ENCODE measurements at regions of chr17 and their contacts with region 1.

Region 1: DNA sequence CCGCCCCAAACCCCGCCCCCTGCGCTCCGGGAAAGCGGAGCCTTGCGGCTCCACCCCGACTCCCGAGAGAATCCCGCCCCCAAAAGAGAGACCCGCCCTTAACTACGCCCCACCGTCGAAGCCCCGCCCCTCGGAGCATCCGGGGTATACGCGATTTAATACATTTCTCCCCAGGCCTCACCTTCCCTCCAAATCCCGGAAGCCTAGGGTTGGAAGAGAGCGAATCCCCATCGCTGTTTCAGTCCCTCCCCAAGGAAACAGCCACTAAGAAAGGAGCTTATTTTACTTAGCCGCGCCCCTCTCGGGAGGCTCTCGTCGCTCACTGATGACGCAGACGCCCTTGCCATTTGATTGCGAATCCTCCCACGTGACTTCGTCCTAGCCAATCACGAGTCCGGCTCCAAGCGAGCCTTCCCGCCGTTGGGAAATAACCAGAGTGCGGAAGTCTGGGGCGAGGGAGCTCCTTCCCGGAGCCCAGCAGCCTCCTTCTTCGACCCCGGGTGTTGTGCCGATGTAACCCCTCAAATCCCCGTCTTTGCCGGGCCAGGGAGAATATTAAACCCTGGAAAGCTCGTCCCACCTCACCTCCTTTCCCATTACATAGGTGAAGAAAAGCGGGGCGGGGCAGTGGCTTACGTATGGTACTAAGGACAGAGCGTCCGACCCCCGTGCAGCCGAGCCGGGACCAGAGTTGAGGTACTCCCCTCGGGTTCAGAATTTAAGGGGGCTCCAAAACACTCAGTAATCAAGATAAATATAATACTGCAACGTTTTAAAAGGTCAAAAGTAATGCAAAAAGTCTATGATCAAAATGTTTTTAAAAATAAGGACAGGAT is 462 bp upstream of the FDXR start:
- DNase-seq: peak; percentile 97 to 100 (median 99)
- H3K4me3 ChIP-seq: peak overlapping the region; percentile 79 to 84
- H3K4me3 Mint-ChIP-seq: peak overlapping the region; percentile 87 to 98 (median 94)
- H3K27ac ChIP-seq: peak overlapping the region; percentile 90
- H3K27ac Mint-ChIP-seq: peak overlapping the region; percentile 90 to 98 (median 98)
- H3K4me1 ChIP-seq: peaks cover 22% of the 10 kb centered on the region
- H3K4me1 Mint-ChIP-seq: peaks cover 10 to 27% (median 17%) of the 10 kb centered on the region in 4 donors
- H3K27me3 ChIP-seq: no peaks in the 10 kb centered on the region
- H3K27me3 Mint-ChIP-seq: no peaks in the 10 kb centered on the region

Region 2: GRCh38 chr17:74748529-74749365 is 124.5 kb before region 1 on chr17 and contains the start of gene NHERF1:
- CTCF ChIA-PET with region 1: interaction called, 6 read pairs
- POLR2A ChIA-PET with region 1: interaction called, 17 read pairs
- intact Hi-C with region 1: loop called (anchors 1 kb)
- DNase-seq: peak; percentile 61 to 96 (median 94)
- H3K4me3 ChIP-seq: peak within 1 kb of the TSS; percentile 64 to 92
- H3K4me3 Mint-ChIP-seq: peak within 1 kb of the TSS; percentile 90 to 99 (median 98)
- H3K27ac ChIP-seq: peak within 1 kb of the TSS; percentile 80
- H3K27ac Mint-ChIP-seq: peak within 1 kb of the TSS; percentile 88 to 98 (median 94)
- H3K4me1 ChIP-seq: peaks cover 73% of the 10 kb centered on the region
- H3K4me1 Mint-ChIP-seq: peaks cover 43 to 81% (median 60%) of the 10 kb centered on the region in 4 donors
- H3K27me3 ChIP-seq: no peaks in the 10 kb centered on the region
- H3K27me3 Mint-ChIP-seq: no peaks in the 10 kb centered on the region
- total RNA-seq, gene NHERF1: 202 to 209 TPM

Region 3: GRCh38 chr17:74852237-74853047 is 20.8 kb before region 1 on chr17:
- CTCF ChIA-PET with region 1: no interaction called
- POLR2A ChIA-PET with region 1: interaction called, 6 read pairs
- intact Hi-C with region 1: loop called (anchors 1 kb)
- DNase-seq: peak; percentile 60 to 80 (median 71)
- H3K4me3 ChIP-seq: peak overlapping the region in 1 of 2 donors; percentile 41
- H3K4me3 Mint-ChIP-seq: peak overlapping the region; percentile 75 to 84 (median 78)
- H3K27ac ChIP-seq: no peak overlapping the region
- H3K27ac Mint-ChIP-seq: peak overlapping the region in 2 of 7 donors; percentile 24 to 72
- H3K4me1 ChIP-seq: peaks cover 11% of the 10 kb centered on the region
- H3K4me1 Mint-ChIP-seq: peaks cover 3 to 19% (median 6%) of the 10 kb centered on the region in 4 donors
- H3K27me3 ChIP-seq: peaks cover 25% of the 10 kb centered on the region
- H3K27me3 Mint-ChIP-seq: peaks cover 19 to 50% of the 10 kb centered on the region in 2 donors

Region 4: DNA sequence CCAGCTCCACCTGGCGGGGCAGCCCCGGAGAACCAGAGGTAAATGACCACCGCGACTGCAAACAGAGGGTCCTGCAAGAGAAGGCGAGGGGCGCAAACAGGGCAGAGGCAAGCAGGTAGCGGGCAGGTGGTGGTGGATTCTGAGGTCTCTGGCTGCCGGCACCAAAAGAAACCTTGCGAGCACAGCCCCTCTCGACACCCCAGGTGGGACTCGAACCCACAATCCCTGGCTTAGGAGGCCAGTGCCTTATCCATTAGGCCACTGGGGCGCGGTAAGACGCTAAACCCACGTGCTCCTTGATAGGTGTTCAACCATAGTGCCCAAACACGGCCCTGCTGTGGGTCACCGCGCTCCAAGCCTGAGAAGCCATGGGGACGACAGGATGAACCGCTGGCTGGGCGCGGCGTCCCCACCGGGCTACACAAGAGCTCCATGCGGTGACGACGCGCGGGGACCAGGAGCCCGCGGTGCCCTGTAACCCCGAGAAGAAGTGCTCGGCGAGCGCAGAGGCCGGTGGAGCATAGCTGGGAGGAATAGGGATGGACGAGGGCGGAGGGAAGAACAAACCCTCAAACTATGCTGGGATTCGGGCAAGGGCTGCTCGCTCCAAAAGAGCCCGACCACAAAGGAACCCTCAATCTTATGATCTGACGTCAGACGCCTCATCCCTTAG is 161.1 kb after region 1 on chr17:
- CTCF ChIA-PET with region 1: no interaction called
- POLR2A ChIA-PET with region 1: interaction called, 3 read pairs
- intact Hi-C with region 1: loop called (anchors 5 kb)
- DNase-seq: peak; percentile 73 to 83 (median 75)
- H3K4me3 ChIP-seq: peak overlapping the region; percentile 64 to 70
- H3K4me3 Mint-ChIP-seq: peak overlapping the region; percentile 79 to 91 (median 88)
- H3K27ac ChIP-seq: peak overlapping the region; percentile 55
- H3K27ac Mint-ChIP-seq: peak overlapping the region; percentile 99 to 100 (median 100)
- H3K4me1 ChIP-seq: peaks cover 57% of the 10 kb centered on the region
- H3K4me1 Mint-ChIP-seq: peaks cover 31 to 69% (median 54%) of the 10 kb centered on the region in 4 donors
- H3K27me3 ChIP-seq: no peaks in the 10 kb centered on the region
- H3K27me3 Mint-ChIP-seq: peaks cover 0 to 14% of the 10 kb centered on the region in 2 donors

Measured in CD4-positive, alpha-beta memory T cell (primary cell).